Activated naive CD8-positive, alpha-beta T cell treated with anti-CD3 and anti-CD28 coated beads, Interleukin-2, amount 10 ng/mL, durations not matched to agents 7 days and 5 days (primary cell): ENCODE measurements at regions of chr20 and their contacts with region 1.

Region 1: GRCh38 chr20:381581-382290 is 1.2 kb downstream of the TRIB3 start:
- DNase-seq: peak; percentile 82
- ATAC-seq: peak; percentile 81
- H3K4me3 Mint-ChIP-seq: peak overlapping the region; percentile 85
- H3K27ac Mint-ChIP-seq: peak overlapping the region; percentile 86
- H3K4me1 Mint-ChIP-seq: peaks cover 15% of the 10 kb centered on the region
- H3K27me3 Mint-ChIP-seq: no peaks in the 10 kb centered on the region

Region 2: GRCh38 chr20:347640-348484 is 33.9 kb before region 1 on chr20:
- POLR2A ChIA-PET with region 1: no interaction called
- DNase-seq: peak; percentile 77
- ATAC-seq: peak; percentile 83
- H3K4me3 Mint-ChIP-seq: peak overlapping the region; percentile 99
- H3K27ac Mint-ChIP-seq: peak overlapping the region; percentile 95
- H3K4me1 Mint-ChIP-seq: peaks cover 25% of the 10 kb centered on the region
- H3K27me3 Mint-ChIP-seq: peaks cover 4% of the 10 kb centered on the region

Region 3: GRCh38 chr20:362271-363254 is 19.2 kb before region 1 on chr20:
- POLR2A ChIA-PET with region 1: interaction called, 14 read pairs
- DNase-seq: peak; percentile 62
- ATAC-seq: peak; percentile 69
- H3K4me3 Mint-ChIP-seq: no peak overlapping the region
- H3K27ac Mint-ChIP-seq: peak overlapping the region; percentile 75
- H3K4me1 Mint-ChIP-seq: peaks cover 26% of the 10 kb centered on the region
- H3K27me3 Mint-ChIP-seq: peaks cover 7% of the 10 kb centered on the region

Region 4: DNA sequence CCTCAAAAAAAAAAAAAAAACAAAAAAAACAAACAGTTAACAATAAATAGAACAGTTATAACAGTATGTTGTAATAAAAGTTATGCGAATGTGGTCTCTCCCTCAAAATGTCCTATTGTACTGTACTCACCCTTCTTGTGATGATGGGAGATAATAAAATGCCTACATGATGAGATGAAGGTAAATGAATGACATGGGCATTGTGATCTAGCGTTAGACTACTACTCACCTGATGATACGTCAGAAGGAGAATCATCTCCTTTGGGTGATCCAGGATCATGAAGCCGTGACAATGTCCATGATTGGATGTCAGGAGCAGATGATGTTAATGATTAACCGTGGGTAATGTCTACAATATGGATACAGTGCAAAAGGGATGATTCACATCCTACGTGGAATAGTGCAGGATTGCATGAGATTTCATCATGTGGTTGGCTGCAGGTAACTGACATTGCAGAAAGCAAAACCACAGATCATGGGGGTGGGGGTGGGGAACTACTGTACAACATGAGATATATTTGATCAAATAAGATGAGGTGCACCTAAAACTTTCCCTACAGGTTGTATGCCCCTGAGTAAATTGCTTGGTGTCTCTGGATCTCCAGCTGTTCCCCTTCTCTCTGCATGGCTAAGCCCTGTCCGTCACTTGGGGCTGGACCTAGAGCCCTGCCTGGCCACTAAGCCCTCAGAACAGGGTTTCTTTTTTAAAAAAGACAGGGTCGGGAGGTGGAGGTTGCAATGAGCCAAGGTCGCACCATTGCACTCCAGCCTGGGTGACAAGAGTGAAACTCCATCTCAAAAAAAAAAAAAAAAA is 20.2 kb after region 1 on chr20:
- POLR2A ChIA-PET with region 1: interaction called, 32 read pairs
- DNase-seq: no peak
- ATAC-seq: no peak
- H3K4me3 Mint-ChIP-seq: peak overlapping the region; percentile 4
- H3K27ac Mint-ChIP-seq: peak overlapping the region; percentile 69
- H3K4me1 Mint-ChIP-seq: peaks cover 22% of the 10 kb centered on the region
- H3K27me3 Mint-ChIP-seq: no peaks in the 10 kb centered on the region

Region 5: DNA sequence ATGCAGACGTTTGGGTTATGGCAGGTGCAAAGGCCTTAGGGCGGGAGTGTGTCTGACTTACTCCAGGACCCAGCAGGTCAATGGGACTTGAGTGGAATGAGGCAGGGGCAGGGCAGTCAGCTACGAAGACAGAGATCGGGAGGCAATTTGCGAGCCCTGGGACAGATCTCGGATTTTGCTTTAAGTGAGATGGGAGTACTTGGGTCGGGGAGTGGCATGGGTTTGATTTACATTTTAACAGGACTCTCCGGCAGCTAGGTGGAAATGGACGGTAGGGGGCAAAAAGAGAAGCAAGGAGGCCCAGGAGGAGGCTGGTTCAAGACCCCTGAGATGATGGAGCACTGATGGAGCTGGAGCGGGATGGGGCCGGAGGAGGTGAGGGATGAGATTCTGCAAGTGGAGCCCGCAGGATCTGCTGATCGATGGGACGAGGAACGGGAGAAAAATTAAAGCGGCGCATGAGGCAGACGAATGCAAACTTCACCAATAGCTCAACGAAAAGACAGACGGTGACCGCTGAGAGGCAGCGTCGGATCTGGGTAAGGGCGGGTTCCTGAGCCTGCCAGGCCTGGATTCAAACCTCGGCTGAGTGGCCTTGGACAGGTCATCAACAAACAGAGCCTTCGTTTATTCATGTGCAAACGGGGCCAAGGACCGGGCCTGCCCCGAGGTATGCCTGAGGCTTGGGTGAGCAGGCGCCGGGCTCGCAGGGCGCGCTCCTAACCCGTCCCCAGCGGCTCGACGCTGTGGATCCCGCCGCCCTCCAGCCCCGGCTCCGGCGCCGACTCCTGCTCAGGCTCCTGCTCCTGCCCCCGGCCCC is 25.6 kb after region 1 on chr20:
- POLR2A ChIA-PET with region 1: interaction called, 32 read pairs
- DNase-seq: peak; percentile 82
- ATAC-seq: peak; percentile 75
- H3K4me3 Mint-ChIP-seq: peak overlapping the region; percentile 92
- H3K27ac Mint-ChIP-seq: peak overlapping the region; percentile 95
- H3K4me1 Mint-ChIP-seq: peaks cover 36% of the 10 kb centered on the region
- H3K27me3 Mint-ChIP-seq: no peaks in the 10 kb centered on the region

Region 6: DNA sequence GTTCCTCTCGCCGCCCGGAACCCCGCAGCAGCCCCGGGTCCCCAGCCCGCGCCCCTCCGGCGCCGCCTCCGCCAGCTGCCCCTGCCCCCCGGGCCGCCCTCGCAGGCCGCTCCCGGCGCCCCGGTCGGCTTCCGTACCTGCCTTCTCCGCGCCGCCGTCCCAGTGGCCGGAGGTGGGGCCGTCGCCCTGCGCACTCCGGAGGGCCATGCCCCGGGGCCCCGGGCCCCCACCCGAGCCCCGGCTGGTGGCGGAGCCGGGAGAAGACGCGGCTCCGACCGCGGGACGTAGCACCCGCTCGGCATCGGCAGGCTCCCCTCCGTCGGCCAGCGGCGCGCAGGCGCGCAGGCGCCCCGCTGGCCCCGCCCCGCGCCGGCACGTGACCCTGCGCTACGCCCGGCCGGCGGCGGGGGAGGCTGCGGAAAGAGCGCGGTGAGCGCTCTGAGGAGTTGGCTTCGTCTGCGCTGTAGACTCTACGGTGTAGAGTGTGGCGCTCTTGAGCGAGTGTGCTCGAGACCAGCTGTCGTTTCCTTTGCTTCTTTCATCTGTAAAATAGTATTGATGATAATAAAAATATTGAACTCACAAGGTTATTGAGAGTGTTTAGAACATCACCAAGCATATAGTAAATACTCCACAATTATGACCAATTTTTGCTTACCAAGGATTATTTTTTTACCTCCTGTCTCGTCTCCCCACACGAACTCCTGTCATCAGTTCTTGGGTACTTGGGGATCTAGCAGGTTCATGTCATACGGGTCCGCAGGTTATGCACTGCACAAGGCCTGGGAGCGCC is 80.7 kb after region 1 on chr20 and contains the start of gene TBC1D20:
- POLR2A ChIA-PET with region 1: interaction called, 20 read pairs
- DNase-seq: peak; percentile 95
- ATAC-seq: peak; percentile 97
- H3K4me3 Mint-ChIP-seq: peak within 1 kb of the TSS; percentile 94
- H3K27ac Mint-ChIP-seq: peak within 1 kb of the TSS; percentile 94
- H3K4me1 Mint-ChIP-seq: peaks cover 34% of the 10 kb centered on the region
- H3K27me3 Mint-ChIP-seq: peaks cover 3% of the 10 kb centered on the region
- total RNA-seq, gene TBC1D20: 36.8 to 38.0 TPM